GM10248 (cell line): ENCODE measurements at regions of chr11 and their contacts with region 1.

Region 1: DNA sequence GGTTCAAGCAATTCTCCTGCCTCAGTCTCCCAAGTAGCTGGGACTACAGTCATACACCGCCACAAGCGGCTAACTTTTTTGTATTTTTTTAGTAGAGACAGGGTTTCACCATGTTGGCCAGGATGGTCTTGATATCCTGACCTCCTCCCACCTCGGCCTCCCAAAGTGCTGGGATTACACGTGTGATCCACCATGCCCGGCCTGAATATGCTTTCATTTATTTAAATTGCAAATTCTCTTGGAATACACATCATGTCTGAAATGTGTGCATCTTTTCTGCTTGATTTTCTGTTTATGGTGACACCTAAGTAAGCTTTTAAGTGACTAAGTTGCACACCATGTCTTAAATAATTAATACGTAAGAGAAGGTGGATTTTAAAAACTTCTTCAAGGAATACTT is 31.7 kb downstream of the IZUMO1R start:
- DNase-seq: no peak
- CTCF ChIP-seq: no peak

Region 2: DNA sequence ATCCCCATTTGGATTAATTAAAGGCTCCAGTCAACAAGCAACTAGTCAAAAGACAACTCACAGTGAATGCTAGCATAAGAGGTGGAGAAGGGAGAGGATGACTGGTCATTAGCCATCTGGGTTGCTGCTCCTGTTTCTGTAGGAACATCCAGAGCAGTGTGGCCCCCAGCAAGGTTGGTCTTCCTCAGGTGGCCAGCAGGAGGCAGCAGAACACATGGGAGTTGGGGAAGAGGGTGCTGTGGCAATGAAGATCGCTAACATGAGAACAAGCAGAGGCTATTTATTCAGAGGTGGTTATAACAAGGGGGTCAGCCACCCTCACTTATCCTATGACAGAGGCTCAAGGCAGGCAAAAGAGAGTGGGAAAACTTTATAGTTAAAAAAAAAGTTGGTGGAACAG is 10.4 kb before region 1 on chr11:
- CTCF ChIA-PET with region 1: interaction called, 14 read pairs
- POLR2A ChIA-PET with region 1: no interaction called
- DNase-seq: peak; percentile 71
- CTCF ChIP-seq: peak; percentile 89